Activated CD4-positive, alpha-beta memory T cell treated with anti-CD3 and anti-CD28 coated beads for 36 hours (primary cell): ENCODE measurements at regions of chr2 and their contacts with region 1.

Region 1: DNA sequence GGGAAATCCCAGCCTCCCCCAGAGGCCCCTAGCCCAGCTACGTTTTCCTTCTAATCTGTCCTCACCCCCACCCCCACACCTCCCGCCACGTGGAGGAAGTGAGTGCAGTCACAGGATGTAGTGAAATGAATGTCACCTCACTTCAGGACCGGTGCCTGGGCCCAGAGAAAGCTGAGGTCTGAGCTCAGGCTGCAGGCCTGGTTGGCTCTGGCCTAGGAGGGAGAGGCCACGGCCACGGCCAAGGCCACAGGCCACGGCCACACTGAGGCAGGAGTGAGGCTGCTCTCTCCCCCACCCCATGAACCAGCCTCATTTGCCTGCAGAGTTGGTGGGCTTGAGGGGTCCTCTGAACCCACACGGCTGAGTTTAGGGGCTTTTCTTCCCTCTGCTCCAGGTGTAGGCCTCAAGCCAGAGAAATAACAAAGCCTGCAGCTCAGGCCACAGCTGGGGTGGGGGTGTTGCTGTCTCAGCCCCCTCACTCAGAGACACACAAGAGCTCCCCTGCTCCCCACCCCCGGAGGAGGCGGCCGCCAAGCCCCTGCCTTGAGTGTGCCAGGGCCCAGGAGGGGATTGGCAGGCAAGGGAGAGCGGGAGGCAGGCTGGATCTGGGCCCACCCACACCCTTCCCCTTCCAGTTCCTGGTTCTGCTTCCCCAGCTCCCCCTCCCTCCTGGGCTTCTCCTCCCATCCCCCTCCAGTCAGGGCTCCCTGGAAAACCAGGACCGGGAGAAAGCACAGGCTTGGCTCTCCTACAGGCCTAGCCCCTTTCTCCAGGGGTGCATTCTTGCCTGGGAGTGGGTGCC is 27.0 kb downstream of the DNMT3A start:
- DNase-seq: peak; percentile 96
- H3K4me3 Mint-ChIP-seq: peak overlapping the region; percentile 90
- H3K27ac Mint-ChIP-seq: peak overlapping the region; percentile 95
- H3K4me1 Mint-ChIP-seq: peaks cover 61% of the 10 kb centered on the region
- H3K27me3 Mint-ChIP-seq: no peaks in the 10 kb centered on the region

Region 2: GRCh38 chr2:25301453-25302352 is 13.0 kb before region 1 on chr2:
- CTCF ChIA-PET with region 1: interaction called, 9 read pairs
- POLR2A ChIA-PET with region 1: interaction called, 23 read pairs
- intact Hi-C with region 1: loop called (anchors 1 kb)
- DNase-seq: peak; percentile 94
- H3K4me3 Mint-ChIP-seq: no peak overlapping the region
- H3K27ac Mint-ChIP-seq: peak overlapping the region; percentile 47
- H3K4me1 Mint-ChIP-seq: peaks cover 58% of the 10 kb centered on the region
- H3K27me3 Mint-ChIP-seq: no peaks in the 10 kb centered on the region